ENCODE measurements at regions of chr11 and their contacts with region 1.

Region 1: GRCh38 chr11:110376711-110377324 is 52.9 kb upstream of the FDX1 start:
- DNase-seq: peak in 4 of 10 donors; percentile 33 to 49 (median 42)
- H3K4me3 ChIP-seq: peak overlapping the region in 17 of 59 donors; percentile 3 to 36 (median 17)
- H3K27ac ChIP-seq: peak overlapping the region in 3 of 59 donors; percentile 22 to 47 (median 44)
- H3K27me3 ChIP-seq: no peaks in the 10 kb centered on the region
- CTCF ChIP-seq: peak; percentile 74 to 93 (median 85)

Region 2: GRCh38 chr11:109914809-109915653 is 461.8 kb before region 1 on chr11:
- intact Hi-C with region 1: no loop called
- DNase-seq: no peak
- H3K4me3 ChIP-seq: no peak overlapping the region
- H3K27ac ChIP-seq: no peak overlapping the region
- H3K27me3 ChIP-seq: no peaks in the 10 kb centered on the region
- CTCF ChIP-seq: no peak

Region 3: GRCh38 chr11:109946322-109946846 is 430.4 kb before region 1 on chr11:
- intact Hi-C with region 1: loop called (anchors 5 to 10 kb)
- DNase-seq: peak; percentile 55 to 95 (median 86)
- H3K4me3 ChIP-seq: peak overlapping the region in 58 of 59 donors; percentile 10 to 68 (median 48)
- H3K27ac ChIP-seq: peak overlapping the region in 56 of 59 donors; percentile 4 to 87 (median 64)
- H3K27me3 ChIP-seq: no peaks in the 10 kb centered on the region
- CTCF ChIP-seq: peak; percentile 44 to 97 (median 94)

Region 4: DNA sequence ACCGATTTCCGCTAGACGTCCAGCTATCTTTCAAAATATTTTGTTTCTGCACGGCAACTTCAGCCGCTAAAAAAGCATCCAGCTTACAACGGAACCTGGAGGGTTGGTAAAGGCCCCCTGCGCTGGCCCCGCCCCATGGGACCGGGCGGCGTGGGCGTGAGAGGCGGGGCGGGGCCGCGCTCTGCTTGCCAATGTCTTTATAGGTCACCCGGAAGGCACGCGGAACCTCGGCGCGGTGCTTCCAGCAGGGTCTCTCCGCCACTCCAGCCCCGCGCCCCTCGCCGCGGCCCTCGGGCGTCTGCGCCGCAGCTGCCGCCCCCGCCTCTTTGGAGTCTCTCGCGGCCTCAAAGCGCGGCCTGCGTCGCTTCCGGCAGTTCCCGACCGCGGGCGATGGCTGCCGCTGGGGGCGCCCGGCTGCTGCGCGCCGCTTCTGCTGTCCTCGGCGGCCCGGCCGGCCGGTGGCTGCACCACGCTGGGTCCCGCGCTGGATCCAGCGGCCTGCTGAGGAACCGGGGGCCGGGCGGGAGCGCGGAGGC is 53.0 kb after region 1 on chr11 and contains the start of gene FDX1:
- intact Hi-C with region 1: loop called (anchors 2 to 10 kb)
- DNase-seq: peak; percentile 60 to 87 (median 74)
- H3K4me3 ChIP-seq: peak within 1 kb of the TSS; percentile 69 to 97 (median 88)
- H3K27ac ChIP-seq: peak within 1 kb of the TSS; percentile 67 to 98 (median 93)
- H3K27me3 ChIP-seq: no peaks in the 10 kb centered on the region
- CTCF ChIP-seq: peak in 55 of 56 donors; percentile 3 to 83 (median 60)
- total RNA-seq, gene FDX1: 7.2 to 13.9 (median 10.5) TPM